Posterior vena cava (tissue), 2 donors: ENCODE measurements at regions of chr1 and their contacts with region 1.

Region 1: DNA sequence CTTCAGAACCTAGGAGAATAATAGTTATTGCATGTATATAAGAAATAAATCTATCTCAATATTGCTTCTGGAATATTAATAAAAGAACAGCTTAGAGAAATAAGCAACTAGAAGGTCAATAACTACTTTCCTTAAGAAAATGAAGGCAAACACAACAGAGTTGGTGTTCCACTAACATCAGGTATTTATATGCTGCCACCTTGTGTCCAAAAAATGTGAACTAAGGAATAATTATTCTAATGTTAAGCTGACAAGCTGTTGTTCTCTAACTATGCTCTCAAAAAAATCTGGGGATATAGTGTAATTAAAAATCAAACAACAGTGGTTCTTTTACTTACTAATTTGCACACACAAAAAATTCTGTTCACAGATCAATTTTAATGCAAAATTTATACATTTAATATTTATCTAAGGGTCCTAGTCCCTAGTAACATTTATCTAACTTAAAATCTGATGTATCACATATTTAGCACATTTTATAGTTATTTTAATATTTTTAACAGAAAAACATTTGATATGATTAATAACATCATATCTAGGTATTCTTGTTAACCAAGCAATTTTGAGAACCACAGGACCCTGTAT is 39.6 kb downstream of the UCHL5 start:
- DNase-seq: no peak

Region 2: GRCh38 chr1:192808518-192809306 is 210.8 kb before region 1 on chr1 and contains the start of gene RGS2:
- intact Hi-C with region 1: loop called in 1 of 2 experiments (anchors 10 kb)
- DNase-seq: peak; percentile 97
- total RNA-seq, gene RGS2: 70.8 to 96.2 TPM

Region 3: GRCh38 chr1:193192586-193192985 is 173.1 kb after region 1 on chr1:
- intact Hi-C with region 1: no loop called
- DNase-seq: no peak